AG04449 (cell line): ENCODE measurements at regions of chr10 and their contacts with region 1.

Region 1: GRCh38 chr10:110311357-110311949 is 6.7 kb upstream of the SMNDC1 start:
- DNase-seq: no peak
- H3K4me3 ChIP-seq: no peak overlapping the region
- CTCF ChIP-seq: peak; percentile 61

Region 2: GRCh38 chr10:110497438-110498086 is 186.1 kb after region 1 on chr10 and contains the start of gene DUSP5:
- CTCF ChIA-PET with region 1: interaction called, 16 read pairs
- POLR2A ChIA-PET with region 1: no interaction called
- DNase-seq: no peak
- H3K4me3 ChIP-seq: peak within 1 kb of the TSS; percentile 83
- CTCF ChIP-seq: no peak

Region 3: DNA sequence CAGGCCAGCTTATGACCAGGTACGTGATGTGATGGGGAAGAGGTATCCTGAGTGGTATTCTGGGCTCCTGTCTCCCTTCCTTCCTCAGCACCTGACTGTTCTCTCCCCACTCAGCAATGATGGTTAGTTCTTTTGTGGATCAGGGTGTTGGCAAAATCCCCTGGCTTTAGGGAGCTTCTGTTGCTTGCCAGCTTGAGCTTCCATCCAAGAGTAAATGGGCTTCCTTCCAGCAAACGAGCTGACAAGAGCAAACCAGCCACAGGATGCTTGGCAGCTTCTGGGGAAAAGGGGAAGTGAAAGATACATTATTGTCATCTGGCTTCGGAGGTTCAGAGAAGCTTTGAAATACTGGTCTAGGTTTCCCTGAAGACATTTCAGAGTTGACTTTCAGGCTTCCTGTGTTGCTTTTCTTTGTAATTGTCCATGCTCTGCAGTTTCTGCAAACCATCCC is 191.4 kb after region 1 on chr10:
- CTCF ChIA-PET with region 1: interaction called, 16 read pairs
- POLR2A ChIA-PET with region 1: no interaction called
- DNase-seq: no peak
- H3K4me3 ChIP-seq: no peak overlapping the region; the same call in 1 of the 2 replicates
- CTCF ChIP-seq: no peak

Region 4: GRCh38 chr10:110600487-110601101 is 289.1 kb after region 1 on chr10:
- CTCF ChIA-PET with region 1: interaction called, 171 read pairs
- POLR2A ChIA-PET with region 1: no interaction called
- DNase-seq: no peak
- H3K4me3 ChIP-seq: no peak overlapping the region
- CTCF ChIP-seq: peak; percentile 47